Uterus (tissue), 4 donors: ENCODE measurements at regions of chr15 and their contacts with region 1.

Region 1: DNA sequence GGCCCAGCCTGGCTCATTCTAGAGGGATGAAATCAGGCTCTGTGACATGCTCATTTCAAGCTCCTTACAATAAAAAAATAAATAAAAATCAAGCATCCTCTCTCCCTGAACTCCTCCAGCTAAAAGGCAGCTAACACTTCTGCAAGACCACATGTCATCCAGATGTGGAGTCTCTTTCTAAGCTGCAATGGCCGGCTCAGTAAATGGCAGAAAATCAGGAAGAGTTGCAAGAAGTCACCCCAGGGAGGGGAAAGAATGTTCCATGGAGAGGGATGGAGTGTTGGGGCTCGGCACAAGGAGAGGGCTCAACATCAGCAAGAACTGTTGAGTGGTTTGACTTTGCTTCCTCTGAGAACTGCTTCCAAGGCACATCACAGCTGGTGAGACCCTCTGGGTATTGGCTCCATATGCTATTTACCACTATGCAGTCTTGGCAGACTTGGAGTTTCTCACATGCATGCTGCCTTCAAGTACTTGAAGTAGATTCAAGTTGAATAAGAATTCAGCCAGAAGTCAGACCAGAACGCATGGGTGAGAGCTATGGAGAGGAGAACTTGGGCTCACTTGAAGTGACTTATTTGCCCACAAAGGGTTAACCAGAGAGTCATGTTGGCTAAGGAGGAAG is 689.0 kb downstream of the NTRK3 start:
- DNase-seq: no peak
- H3K4me3 ChIP-seq: no peak overlapping the region
- H3K27ac ChIP-seq: no peak overlapping the region
- H3K4me1 ChIP-seq: no peaks in the 10 kb centered on the region
- H3K27me3 ChIP-seq: no peaks in the 10 kb centered on the region
- CTCF ChIP-seq: no peak
- POLR2A ChIP-seq: no peak

Region 2: DNA sequence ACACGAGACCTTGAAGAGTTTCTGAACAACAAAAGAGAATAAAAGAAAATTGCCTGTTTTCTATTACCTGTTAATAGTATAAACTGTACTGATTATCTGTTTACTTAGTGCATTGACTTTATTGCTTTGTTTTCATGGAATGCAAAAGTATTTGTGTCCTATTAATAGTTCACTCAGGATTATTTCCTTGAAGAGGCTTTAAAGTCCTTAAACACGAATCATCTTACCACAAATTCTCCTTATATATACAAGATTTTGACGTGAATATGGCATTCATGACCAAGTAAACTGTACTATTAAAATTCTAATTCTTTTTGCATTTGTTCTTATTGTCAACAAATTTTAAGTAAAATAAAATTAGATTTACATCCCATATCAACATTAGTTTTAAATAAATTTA is 176.0 kb after region 1 on chr15:
- intact Hi-C with region 1: loop called (anchors 5 kb)
- DNase-seq: no peak
- H3K4me3 ChIP-seq: no peak overlapping the region
- H3K27ac ChIP-seq: no peak overlapping the region
- H3K4me1 ChIP-seq: no peaks in the 10 kb centered on the region
- H3K27me3 ChIP-seq: no peaks in the 10 kb centered on the region
- CTCF ChIP-seq: no peak
- POLR2A ChIP-seq: no peak